Posterior cingulate gyrus (tissue), 11 donors: ENCODE measurements at regions of chr2 and their contacts with region 1.

Region 1: DNA sequence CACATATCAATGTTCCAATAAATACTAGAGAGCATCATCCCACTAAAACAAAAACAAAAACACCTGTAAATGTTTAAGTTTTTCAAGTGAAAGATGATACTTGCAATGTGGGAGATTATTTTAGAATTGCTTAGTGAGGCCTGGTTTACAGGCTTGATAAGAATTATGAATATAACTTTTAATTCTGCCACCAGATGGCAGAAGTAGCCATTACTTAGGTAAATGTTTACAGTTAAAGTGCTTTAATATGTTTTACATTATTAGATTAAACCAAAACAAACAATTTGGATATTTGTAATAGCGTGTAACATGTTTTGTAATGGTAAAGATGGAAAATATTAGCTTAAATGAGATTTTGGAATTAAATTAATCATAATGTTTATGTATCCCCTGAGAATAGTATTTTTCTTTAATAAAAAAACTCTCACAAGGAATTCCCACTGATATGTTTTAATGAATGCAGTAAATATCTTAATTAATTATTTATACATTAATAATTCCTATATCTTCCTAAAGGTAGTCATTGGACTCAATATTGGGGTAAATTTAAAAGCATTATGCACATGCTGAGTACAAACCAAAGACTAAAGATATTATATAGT is 522.0 kb downstream of the SPAG16 start:
- DNase-seq: no peak

Region 2: DNA sequence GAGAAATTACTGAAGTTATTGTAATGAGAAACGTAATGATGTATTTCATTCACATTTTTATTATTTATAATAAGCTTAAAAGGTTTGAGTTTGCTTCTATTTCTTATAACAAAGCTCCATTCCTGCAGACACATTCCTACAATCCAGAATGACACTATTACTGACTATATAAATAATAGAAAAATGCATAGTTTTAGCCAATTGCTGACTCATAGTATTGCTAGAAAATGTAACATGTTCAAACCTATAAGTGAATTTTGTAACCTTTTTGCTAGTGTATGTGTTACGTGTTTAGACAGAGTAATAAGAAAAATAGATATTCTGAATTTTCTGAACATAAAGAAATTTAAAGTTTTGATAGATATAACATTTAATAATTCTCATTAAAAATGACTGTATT is 595.4 kb after region 1 on chr2:
- intact Hi-C with region 1: loop called (anchors 10 kb)
- DNase-seq: no peak

Region 3: DNA sequence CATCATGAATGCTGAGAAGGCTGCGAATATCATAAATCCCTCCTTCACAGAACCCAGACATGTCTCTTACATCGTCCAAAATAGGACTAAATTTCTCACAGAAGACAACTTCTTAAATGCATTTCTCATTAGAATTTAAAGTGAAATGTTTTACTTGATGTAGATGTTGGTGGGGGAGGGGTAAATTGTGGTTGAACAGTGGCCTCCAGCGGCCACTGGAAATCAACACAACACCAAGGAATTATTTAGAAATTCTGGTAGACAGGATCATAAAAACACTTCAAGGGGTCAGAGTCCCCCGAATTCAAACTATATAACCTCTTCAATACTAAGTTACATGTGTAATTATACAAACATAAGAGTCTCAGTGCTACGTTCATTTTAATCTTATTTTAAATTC is 1196.3 kb after region 1 on chr2:
- intact Hi-C with region 1: loop called (anchors 2 kb)
- DNase-seq: peak in 5 of 10 donors; percentile 10 to 85 (median 28)